Tibial artery (tissue), 4 donors: ENCODE measurements at regions of chr11 and their contacts with region 1.

Region 1: DNA sequence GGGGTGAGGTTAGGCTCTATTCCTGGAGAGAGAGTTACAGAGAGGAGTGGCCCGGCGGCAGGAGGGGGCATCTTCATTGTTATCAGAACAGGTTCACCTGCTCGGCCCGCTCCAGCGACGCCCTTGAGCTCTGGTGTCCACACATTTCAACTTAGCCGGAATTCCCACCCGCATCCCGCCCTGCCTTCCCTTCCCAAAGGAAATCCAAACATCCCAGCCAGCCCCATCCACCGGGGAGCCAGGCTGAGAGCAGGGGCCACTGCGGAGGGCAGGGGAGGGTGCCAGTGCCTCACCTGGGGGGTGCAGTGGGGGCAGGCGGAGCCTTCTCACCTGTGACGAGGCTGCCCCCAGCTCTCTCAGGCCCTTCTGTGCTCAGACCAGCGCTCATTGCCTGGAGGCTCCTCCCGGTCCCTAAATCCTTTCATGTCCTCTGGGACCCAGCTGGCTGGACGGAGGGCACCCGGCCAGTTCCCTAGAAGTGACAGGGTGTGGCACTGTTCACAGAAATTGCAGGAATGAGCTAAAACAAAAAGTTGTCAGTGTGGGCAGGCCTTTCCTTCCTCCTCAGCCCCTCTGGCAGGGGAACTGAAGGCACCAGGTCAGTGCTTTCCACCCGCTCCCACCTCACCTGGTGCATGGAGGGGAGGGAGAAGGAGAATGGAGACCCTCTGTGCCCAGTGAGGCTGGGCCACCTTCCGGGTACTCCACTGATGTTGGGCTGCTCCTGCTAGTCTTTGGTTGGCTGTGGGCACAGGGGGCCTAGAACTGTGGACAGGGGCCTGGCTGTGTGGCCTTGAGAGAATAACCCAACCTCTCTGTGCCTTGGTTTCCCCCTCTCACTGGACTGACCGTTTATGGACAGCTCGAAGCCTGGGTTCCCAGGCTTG is 2.2 kb upstream of the MRGPRG start:
- DNase-seq: peak; percentile 20 to 65
- H3K4me3 ChIP-seq: no peak overlapping the region
- H3K27ac ChIP-seq: no peak overlapping the region
- H3K4me1 ChIP-seq: peaks cover 0 to 14% (median 6%) of the 10 kb centered on the region in 4 donors
- H3K27me3 ChIP-seq: peaks cover 0 to 91% of the 10 kb centered on the region in 2 donors
- CTCF ChIP-seq: no peak

Region 2: DNA sequence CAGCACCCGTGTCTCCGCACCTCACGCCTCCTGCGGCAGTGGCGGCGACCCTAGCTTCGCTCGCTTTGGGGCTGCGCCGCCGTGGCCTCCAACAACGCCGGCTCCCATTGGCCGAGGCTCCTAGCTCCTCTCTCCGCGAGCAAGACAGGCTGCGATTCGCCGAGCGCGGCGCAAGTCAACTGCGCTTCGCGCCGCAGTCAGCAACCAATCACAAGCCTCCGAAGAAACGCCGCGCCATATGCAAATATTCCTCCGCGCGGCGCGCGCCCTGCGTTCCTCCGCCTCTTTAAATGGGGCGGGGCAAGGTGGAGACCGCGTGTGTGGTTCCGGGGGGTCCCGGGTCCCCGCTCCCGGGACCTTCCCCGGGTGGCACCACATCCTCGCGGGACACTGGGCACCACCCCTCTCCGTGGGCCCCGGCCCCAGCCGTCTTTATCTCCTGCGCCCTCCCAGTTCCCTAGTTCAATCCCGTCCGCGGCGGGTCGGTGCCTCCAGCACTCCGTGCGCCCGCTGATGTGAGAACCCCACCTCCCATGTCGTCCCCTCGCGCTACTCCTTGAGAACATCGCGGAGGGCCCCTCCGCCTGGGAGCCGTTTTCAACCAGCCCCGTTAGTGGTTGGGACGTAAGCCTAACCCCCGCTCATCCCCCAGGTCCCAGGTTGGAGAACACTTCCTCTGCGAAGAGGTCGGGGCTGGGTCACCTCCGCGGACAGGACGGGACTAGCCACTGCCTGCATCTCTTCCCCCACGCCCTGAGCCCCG is 228.3 kb before region 1 on chr11 and contains the start of gene NAP1L4:
- intact Hi-C with region 1: no loop called
- DNase-seq: peak; percentile 96 to 97
- H3K4me3 ChIP-seq: peak within 1 kb of the TSS; percentile 81 to 89
- H3K27ac ChIP-seq: peak within 1 kb of the TSS; percentile 90 to 95
- H3K4me1 ChIP-seq: peaks cover 0 to 44% (median 36%) of the 10 kb centered on the region in 4 donors
- H3K27me3 ChIP-seq: no peaks in the 10 kb centered on the region
- CTCF ChIP-seq: peak in 1 of 2 experiments; percentile 7

Region 3: GRCh38 chr11:3037040-3037944 is 183.5 kb before region 1 on chr11:
- intact Hi-C with region 1: loop called (anchors 5 kb)
- DNase-seq: peak; percentile 86 to 90
- H3K4me3 ChIP-seq: no peak overlapping the region
- H3K27ac ChIP-seq: no peak overlapping the region
- H3K4me1 ChIP-seq: peaks cover 0 to 6% (median under 1%) of the 10 kb centered on the region in 4 donors
- H3K27me3 ChIP-seq: no peaks in the 10 kb centered on the region
- CTCF ChIP-seq: peak; percentile 70 to 81

Region 4: GRCh38 chr11:3109921-3110706 is 110.7 kb before region 1 on chr11:
- intact Hi-C with region 1: loop called (anchors 10 kb)
- DNase-seq: peak; percentile 22 to 71
- H3K4me3 ChIP-seq: no peak overlapping the region
- H3K27ac ChIP-seq: no peak overlapping the region
- H3K4me1 ChIP-seq: peaks cover 0 to 10% (median 0%) of the 10 kb centered on the region in 4 donors
- H3K27me3 ChIP-seq: no peaks in the 10 kb centered on the region
- CTCF ChIP-seq: peak; percentile 58 to 62

Region 5: DNA sequence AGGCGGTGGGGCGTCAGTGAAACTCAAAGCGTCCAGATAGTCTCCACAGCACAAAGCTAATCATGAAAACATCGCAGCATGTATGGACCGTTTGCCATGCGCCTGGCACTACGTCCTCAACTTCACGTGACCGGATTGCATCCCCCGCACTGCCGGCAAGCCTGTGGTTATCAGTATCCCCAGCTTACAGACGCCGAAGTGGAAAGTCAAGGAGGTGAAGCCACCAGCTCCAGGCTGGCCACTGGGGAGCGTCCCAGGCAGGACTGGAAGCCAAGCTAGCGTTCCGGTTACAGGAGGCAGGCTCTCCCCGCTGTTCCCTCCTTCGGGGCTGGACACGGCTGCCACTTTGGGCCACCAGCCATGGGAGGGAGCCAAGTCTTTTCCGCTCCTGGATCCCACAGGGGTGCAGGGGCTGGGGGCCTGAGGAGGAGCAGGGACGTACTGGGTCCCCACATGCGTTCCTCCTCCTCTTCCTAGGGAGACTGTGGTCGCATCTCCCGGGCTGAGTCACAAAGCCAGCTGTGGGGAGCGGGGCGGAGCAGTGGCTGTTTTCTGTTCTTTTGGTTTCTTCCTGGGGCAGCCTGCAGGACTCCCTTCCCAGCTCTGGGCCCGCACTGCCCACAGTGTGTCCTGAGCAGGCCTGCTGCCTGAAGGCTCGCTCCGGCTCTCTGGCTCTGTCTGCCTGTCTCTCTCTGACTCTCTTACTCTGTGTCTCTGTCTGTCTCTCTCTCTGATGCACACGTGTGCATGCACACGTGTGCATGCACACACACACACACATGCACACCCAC is 51.3 kb before region 1 on chr11:
- intact Hi-C with region 1: loop called (anchors 5 kb)
- DNase-seq: peak; percentile 73 to 90
- H3K4me3 ChIP-seq: peak overlapping the region; percentile 39 to 55
- H3K27ac ChIP-seq: peak overlapping the region; percentile 70 to 82
- H3K4me1 ChIP-seq: peaks cover 0 to 29% (median 24%) of the 10 kb centered on the region in 4 donors
- H3K27me3 ChIP-seq: no peaks in the 10 kb centered on the region
- CTCF ChIP-seq: peak in 1 of 2 experiments; percentile 16